ENCODE measurements at regions of chr3 and their contacts with region 1.

Region 1: DNA sequence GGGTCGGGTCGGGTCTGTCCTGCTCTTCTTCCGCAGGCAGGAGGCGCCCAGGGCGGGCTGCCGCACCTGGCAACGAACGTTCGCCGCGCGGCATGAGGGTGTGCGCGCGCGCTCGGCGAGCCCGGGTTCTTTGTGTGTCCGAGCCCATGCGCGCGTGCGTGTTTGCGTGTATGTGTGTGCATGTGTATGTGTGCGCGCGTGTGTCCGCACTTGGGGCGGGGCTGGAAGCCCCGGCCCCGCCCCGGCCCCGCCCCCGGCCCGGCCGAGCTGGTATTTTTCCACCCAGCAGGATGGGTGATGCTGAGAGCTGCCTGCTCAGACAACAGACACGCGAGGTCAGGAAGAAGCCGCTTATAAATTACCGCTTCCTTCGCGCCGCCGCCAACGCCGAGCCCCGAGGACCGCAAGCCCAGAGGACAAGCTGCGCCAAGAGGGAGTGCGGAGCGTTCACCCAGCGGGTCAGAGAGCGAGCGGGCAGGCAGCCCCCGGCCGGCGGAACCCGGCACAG is at the start of gene SLC6A6:
- DNase-seq: peak; percentile 91
- H3K4me3 ChIP-seq: peak within 1 kb of the TSS; percentile 9 to 90 (median 34)
- H3K27ac ChIP-seq: peak within 1 kb of the TSS; percentile 32
- H3K4me1 ChIP-seq: peaks cover 12% of the 10 kb centered on the region
- H3K27me3 ChIP-seq: no peaks in the 10 kb centered on the region
- CTCF ChIP-seq: peak; percentile 17 to 51
- POLR2A ChIP-seq: peak; percentile 80
- total RNA-seq, gene SLC6A6: 33.8 and 38.0 TPM in 2 replicates

Region 2: DNA sequence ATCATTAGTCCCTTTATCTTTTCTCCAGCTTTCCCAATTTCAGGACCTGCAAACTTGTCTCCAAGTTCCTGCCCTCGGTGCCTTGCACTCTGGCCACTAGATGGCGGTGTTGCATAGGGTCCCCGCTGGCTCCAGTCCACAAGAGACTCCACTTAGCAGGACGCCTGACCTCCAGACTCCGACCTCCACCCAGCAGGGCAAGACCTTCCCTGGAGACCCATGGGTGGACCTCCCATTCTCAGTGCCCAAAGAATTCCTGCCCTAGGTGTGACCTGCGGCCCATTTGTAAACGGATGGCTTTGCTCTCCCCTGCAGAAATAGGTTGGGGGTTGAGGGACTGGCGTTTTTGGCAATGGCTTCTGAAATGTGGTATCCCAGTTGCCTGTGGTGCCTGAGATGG is 141.1 kb before region 1 on chr3:
- CTCF ChIA-PET with region 1: interaction called, 4 read pairs
- POLR2A ChIA-PET with region 1: no interaction called
- dilution Hi-C with region 1: no loop called
- intact Hi-C with region 1: loop called (anchors 1 kb)
- DNase-seq: peak; percentile 81
- H3K4me3 ChIP-seq: no peak overlapping the region
- H3K27ac ChIP-seq: no peak overlapping the region
- H3K4me1 ChIP-seq: no peaks in the 10 kb centered on the region
- H3K27me3 ChIP-seq: peaks cover 6 to 9% of the 10 kb centered on the region in 2 experiments
- CTCF ChIP-seq: peak; percentile 90 to 91
- POLR2A ChIP-seq: no peak

Region 3: GRCh38 chr3:14431892-14432834 is 29.8 kb after region 1 on chr3:
- CTCF ChIA-PET with region 1: interaction called, 5 read pairs
- POLR2A ChIA-PET with region 1: no interaction called
- dilution Hi-C with region 1: no loop called
- intact Hi-C with region 1: loop called (anchors 1 kb)
- DNase-seq: peak; percentile 83
- H3K4me3 ChIP-seq: no peak overlapping the region
- H3K27ac ChIP-seq: peak overlapping the region; percentile 77
- H3K4me1 ChIP-seq: peaks cover 56% of the 10 kb centered on the region
- H3K27me3 ChIP-seq: no peaks in the 10 kb centered on the region
- CTCF ChIP-seq: no peak
- POLR2A ChIP-seq: no peak

Region 4: DNA sequence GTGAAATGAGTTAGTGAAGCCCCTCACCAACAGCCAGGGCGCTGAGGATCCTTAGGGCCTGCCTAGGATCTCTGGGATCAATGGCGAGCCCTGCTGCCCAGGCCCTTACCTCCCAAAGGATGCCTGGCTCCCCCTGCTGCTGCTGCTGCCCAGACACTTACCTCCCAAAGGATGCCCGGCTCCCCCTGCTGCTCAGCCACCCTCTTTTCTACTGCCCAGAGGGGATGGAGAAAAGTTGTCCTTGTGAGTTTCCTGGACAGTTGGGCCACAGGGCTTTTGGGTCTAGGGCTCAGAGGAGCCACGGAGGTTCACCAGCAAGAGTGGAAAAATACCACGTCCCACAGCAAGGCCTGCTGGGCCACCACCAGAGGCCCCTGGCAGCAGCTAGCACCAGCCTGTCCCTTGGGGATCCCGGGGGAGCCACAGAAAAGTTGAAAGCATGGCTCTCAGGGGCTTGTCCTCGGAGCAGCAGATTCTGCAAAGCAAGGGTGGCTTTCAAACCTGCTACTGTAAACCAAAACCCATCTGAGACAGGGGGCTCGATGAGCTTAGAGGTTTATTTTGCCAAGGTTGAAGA is 59.5 kb after region 1 on chr3:
- CTCF ChIA-PET with region 1: interaction called, 37 read pairs
- POLR2A ChIA-PET with region 1: no interaction called
- dilution Hi-C with region 1: no loop called
- intact Hi-C with region 1: loop called (anchors 1 kb)
- DNase-seq: peak; percentile 73
- H3K4me3 ChIP-seq: no peak overlapping the region
- H3K27ac ChIP-seq: no peak overlapping the region
- H3K4me1 ChIP-seq: peaks cover 38% of the 10 kb centered on the region
- H3K27me3 ChIP-seq: no peaks in the 10 kb centered on the region
- CTCF ChIP-seq: peak; percentile 77 to 93
- POLR2A ChIP-seq: no peak

Region 5: GRCh38 chr3:14688525-14688924 is 286.2 kb after region 1 on chr3:
- CTCF ChIA-PET with region 1: no interaction called
- POLR2A ChIA-PET with region 1: no interaction called
- dilution Hi-C with region 1: no loop called
- intact Hi-C with region 1: no loop called
- DNase-seq: no peak
- H3K4me3 ChIP-seq: no peak overlapping the region
- H3K27ac ChIP-seq: no peak overlapping the region
- H3K4me1 ChIP-seq: no peaks in the 10 kb centered on the region
- H3K27me3 ChIP-seq: peaks cover 4 to 5% of the 10 kb centered on the region in 2 experiments
- CTCF ChIP-seq: no peak
- POLR2A ChIP-seq: no peak

Region 6: GRCh38 chr3:15113463-15113862 is 711.1 kb after region 1 on chr3:
- CTCF ChIA-PET with region 1: no interaction called
- POLR2A ChIA-PET with region 1: no interaction called
- dilution Hi-C with region 1: no loop called
- intact Hi-C with region 1: no loop called
- DNase-seq: no peak
- H3K4me3 ChIP-seq: no peak overlapping the region
- H3K27ac ChIP-seq: no peak overlapping the region
- H3K4me1 ChIP-seq: no peaks in the 10 kb centered on the region
- H3K27me3 ChIP-seq: peaks cover 2 to 15% of the 10 kb centered on the region in 2 experiments
- CTCF ChIP-seq: no peak
- POLR2A ChIP-seq: no peak

Measured in endothelial cell of umbilical vein (primary cell).